Posterior vena cava (tissue), 2 donors: ENCODE measurements at regions of chr17 and their contacts with region 1.

Region 1: GRCh38 chr17:4565209-4566141 is 5.1 kb upstream of the GGT6 start:
- DNase-seq: peak; percentile 85

Region 2: DNA sequence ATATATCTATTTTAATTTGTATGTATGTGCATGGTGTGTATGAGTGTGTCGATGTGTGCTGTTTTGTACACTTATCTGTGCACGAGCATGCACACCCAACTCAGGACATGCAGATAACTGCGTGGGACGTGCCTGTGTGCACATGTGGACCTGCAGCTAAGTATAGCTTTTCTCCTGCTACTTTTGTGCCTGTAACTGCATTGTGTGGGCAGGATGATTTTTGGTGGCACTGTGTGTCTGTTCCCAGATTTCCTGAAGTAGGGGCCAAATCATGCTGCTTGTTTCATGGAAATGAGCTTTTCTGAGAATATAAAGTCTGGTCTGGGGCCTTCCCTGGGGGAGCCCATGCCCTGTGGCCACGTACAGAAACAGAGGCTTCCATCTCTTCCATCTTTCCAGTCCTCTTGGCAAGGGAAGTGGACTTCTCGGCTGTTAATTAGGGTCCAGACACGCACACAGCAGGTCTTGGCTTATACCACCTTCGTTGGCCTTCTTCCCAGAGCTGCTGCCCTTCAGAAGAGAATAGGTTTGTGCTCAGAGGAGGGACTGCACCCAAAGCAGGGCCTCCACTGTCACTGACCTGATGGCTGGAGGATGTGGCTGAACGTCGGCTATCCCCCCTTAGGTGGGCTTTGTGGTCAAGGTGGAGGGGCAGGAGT is 101.5 kb before region 1 on chr17:
- intact Hi-C with region 1: no loop called
- DNase-seq: no peak

Region 3: GRCh38 chr17:4625181-4625617 is 59.7 kb after region 1 on chr17:
- intact Hi-C with region 1: loop called (anchors 1 to 5 kb)
- DNase-seq: no peak

Region 4: DNA sequence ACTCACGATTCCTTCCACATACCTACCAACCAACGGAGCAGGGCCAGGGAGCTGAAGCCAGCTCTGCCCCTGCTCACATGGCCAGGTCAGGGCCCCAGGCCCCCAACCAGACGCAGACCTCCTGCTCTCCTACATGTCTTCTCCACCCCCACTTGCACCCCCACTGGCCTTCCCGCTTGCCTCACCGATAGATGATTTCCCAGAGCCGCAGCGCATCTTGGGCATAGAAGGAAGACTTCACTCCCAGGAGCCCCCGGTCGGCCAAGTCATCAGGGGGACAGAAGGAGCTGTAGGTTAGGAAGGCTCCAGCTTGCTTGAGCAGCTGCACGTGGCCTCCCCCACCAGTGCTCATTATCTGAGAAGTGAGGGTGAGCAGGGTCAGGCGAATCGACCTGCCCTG is 67.5 kb after region 1 on chr17:
- intact Hi-C with region 1: loop called in 1 of 2 experiments (anchors 1 kb)
- DNase-seq: peak; percentile 72

Region 5: GRCh38 chr17:6286239-6286638 is 1720.8 kb after region 1 on chr17:
- intact Hi-C with region 1: no loop called
- DNase-seq: no peak